CD8-positive, alpha-beta T cell (primary cell): ENCODE measurements at regions of chr6 and their contacts with region 1.

Region 1: DNA sequence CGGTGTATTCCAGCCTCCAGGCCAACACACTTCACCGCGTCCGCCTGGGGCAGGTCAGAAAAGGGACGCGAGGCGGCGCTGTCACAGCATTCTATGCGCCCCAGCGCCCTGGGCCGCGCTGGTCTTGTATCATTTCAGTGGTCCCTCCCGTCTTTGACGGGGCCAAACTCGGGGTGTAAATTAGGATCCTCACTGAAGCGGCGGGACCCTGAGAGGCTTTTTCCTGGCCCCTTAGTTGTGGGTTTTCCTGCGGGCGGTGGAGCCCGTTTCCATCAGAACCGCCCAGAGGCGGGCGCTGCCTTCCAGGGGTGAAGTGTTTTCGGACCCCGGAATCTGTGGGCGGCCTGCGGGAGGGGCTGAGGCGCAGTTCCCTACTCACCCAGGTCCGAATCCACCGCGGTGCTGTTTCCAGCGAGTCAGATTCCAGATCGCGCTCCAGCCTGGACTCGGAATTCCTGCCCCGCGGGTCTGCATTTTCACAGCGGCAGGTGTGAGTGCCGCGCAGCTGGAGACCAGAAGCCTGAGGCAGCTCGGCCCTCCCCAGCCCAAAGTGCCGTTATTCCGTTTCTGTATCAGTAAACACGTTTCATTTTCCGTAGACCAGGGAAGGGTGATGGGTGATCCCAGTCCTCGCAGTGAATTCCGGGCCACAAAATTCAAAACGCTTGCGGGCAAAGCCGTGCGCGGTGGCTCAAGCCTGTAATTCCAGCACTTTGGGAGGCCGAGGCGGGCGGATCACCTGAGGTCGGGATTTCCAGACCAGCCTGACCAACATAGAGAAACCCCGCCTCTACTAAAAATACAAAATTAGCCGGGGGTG is 3.9 kb upstream of the MICB start:
- DNase-seq: peak; percentile 62 to 90 (median 76)
- ATAC-seq: peak; percentile 32
- H3K4me3 ChIP-seq: peak overlapping the region; percentile 65 to 81
- H3K4me3 Mint-ChIP-seq: peak overlapping the region; percentile 77
- H3K27ac ChIP-seq: peak overlapping the region; percentile 29 to 71
- H3K27ac Mint-ChIP-seq: peak overlapping the region; percentile 91
- H3K4me1 ChIP-seq: peaks cover 41% of the 10 kb centered on the region
- H3K4me1 Mint-ChIP-seq: peaks cover 49% of the 10 kb centered on the region
- H3K27me3 ChIP-seq: no peaks in the 10 kb centered on the region
- H3K27me3 Mint-ChIP-seq: no peaks in the 10 kb centered on the region
- CTCF ChIP-seq: peak; percentile 83

Region 2: GRCh38 chr6:30686908-30687658 is 807.0 kb before region 1 on chr6:
- CTCF ChIA-PET with region 1: no interaction called
- POLR2A ChIA-PET with region 1: no interaction called
- intact Hi-C with region 1: loop called in 1 of 2 experiments (anchors 10 kb)
- DNase-seq: peak in 8 of 9 experiments; percentile 47 to 79 (median 68)
- ATAC-seq: peak; percentile 21
- H3K4me3 ChIP-seq: peak overlapping the region; percentile 86 to 95
- H3K4me3 Mint-ChIP-seq: peak overlapping the region; percentile 99
- H3K27ac ChIP-seq: peak overlapping the region; percentile 75 to 94
- H3K27ac Mint-ChIP-seq: peak overlapping the region; percentile 95
- H3K4me1 ChIP-seq: peaks cover 31% of the 10 kb centered on the region
- H3K4me1 Mint-ChIP-seq: peaks cover 54% of the 10 kb centered on the region
- H3K27me3 ChIP-seq: no peaks in the 10 kb centered on the region
- H3K27me3 Mint-ChIP-seq: no peaks in the 10 kb centered on the region
- CTCF ChIP-seq: no peak

Region 3: GRCh38 chr6:31462964-31463870 is 30.9 kb before region 1 on chr6:
- CTCF ChIA-PET with region 1: interaction called, 3 read pairs
- POLR2A ChIA-PET with region 1: interaction called, 6 read pairs
- intact Hi-C with region 1: loop called in 1 of 2 experiments (anchors 2 kb)
- DNase-seq: peak; percentile 81 to 98 (median 90)
- ATAC-seq: peak; percentile 93
- H3K4me3 ChIP-seq: peak overlapping the region; percentile 80 to 82
- H3K4me3 Mint-ChIP-seq: peak overlapping the region; percentile 100
- H3K27ac ChIP-seq: peak overlapping the region; percentile 89 to 98
- H3K27ac Mint-ChIP-seq: peak overlapping the region; percentile 98
- H3K4me1 ChIP-seq: peaks cover 48% of the 10 kb centered on the region
- H3K4me1 Mint-ChIP-seq: peaks cover 67% of the 10 kb centered on the region
- H3K27me3 ChIP-seq: no peaks in the 10 kb centered on the region
- H3K27me3 Mint-ChIP-seq: no peaks in the 10 kb centered on the region
- CTCF ChIP-seq: no peak

Region 4: GRCh38 chr6:31580807-31581433 is 86.8 kb after region 1 on chr6:
- CTCF ChIA-PET with region 1: interaction called, 8 read pairs
- POLR2A ChIA-PET with region 1: interaction called, 8 read pairs
- intact Hi-C with region 1: loop called (anchors 5 kb)
- DNase-seq: peak; percentile 81 to 97 (median 90)
- ATAC-seq: peak; percentile 73
- H3K4me3 ChIP-seq: peak overlapping the region; percentile 92 to 100
- H3K4me3 Mint-ChIP-seq: peak overlapping the region; percentile 99
- H3K27ac ChIP-seq: peak overlapping the region; percentile 77 to 91
- H3K27ac Mint-ChIP-seq: peak overlapping the region; percentile 96
- H3K4me1 ChIP-seq: peaks cover 69% of the 10 kb centered on the region
- H3K4me1 Mint-ChIP-seq: peaks cover 77% of the 10 kb centered on the region
- H3K27me3 ChIP-seq: no peaks in the 10 kb centered on the region
- H3K27me3 Mint-ChIP-seq: no peaks in the 10 kb centered on the region
- CTCF ChIP-seq: peak; percentile 98

Region 5: GRCh38 chr6:31834434-31835198 is 340.5 kb after region 1 on chr6:
- CTCF ChIA-PET with region 1: no interaction called
- POLR2A ChIA-PET with region 1: no interaction called
- intact Hi-C with region 1: loop called (anchors 2 to 5 kb)
- DNase-seq: peak; percentile 70 to 89 (median 81)
- ATAC-seq: peak; percentile 75
- H3K4me3 ChIP-seq: peak overlapping the region; percentile 84 to 97
- H3K4me3 Mint-ChIP-seq: peak overlapping the region; percentile 98
- H3K27ac ChIP-seq: peak overlapping the region; percentile 93 to 99
- H3K27ac Mint-ChIP-seq: peak overlapping the region; percentile 99
- H3K4me1 ChIP-seq: peaks cover 42% of the 10 kb centered on the region
- H3K4me1 Mint-ChIP-seq: peaks cover 59% of the 10 kb centered on the region
- H3K27me3 ChIP-seq: no peaks in the 10 kb centered on the region
- H3K27me3 Mint-ChIP-seq: no peaks in the 10 kb centered on the region
- CTCF ChIP-seq: no peak